Dorsolateral prefrontal cortex (tissue), 120 donors: ENCODE measurements at regions of chr1 and their contacts with region 1.

Region 1: GRCh38 chr1:19704247-19705113 is 39.8 kb downstream of the HTR6 start:
- DNase-seq: peak; percentile 69 to 86 (median 80)
- H3K4me3 ChIP-seq: peak overlapping the region in 22 of 59 donors; percentile 2 to 49 (median 30)
- H3K27ac ChIP-seq: peak overlapping the region in 2 of 59 donors; percentile 3 to 44
- H3K27me3 ChIP-seq: no peaks in the 10 kb centered on the region
- CTCF ChIP-seq: peak; percentile 70 to 95 (median 90)

Region 2: GRCh38 chr1:19661721-19662228 is 42.7 kb before region 1 on chr1:
- intact Hi-C with region 1: loop called (anchors 5 kb)
- DNase-seq: no peak
- H3K4me3 ChIP-seq: no peak overlapping the region
- H3K27ac ChIP-seq: no peak overlapping the region
- H3K27me3 ChIP-seq: peaks cover 0 to 32% (median 17%) of the 10 kb centered on the region in 45 donors
- CTCF ChIP-seq: peak; percentile 62 to 94 (median 81)

Region 3: DNA sequence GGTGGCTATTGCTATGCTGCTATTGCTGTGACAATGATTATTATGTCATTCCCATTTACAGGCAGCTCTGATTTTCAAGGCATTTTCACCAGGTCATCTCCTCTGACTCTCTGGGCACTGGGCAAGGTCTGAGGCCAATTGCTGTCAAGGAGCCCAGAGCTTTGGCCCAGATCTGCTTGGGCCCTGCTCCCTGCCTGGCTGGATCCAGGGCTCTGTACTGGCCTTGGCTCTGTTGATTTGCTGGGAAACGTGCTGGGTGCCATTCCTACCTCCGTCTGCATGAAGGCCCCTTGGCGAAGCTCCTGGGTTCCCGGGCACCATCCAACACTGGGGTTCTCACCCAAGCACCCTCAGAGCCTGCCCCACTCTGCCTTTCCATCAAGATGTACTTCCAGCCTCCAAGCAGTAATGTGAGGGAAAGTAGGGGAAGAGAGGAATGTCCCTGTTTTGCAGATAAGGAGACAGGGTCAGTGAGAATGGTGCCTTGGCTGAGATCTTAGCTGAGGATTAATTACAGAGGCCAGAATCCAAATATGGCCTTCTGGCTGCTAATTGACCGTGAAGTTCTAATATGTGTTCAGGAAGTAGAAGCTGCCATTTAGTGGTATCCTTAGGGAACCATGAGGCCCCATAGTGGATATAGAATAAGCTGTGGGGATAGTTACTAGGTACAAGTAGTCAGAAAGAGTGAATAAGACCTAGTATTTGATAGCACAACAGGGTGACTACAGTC is 24.1 kb after region 1 on chr1:
- intact Hi-C with region 1: no loop called
- DNase-seq: peak in 2 of 10 donors; percentile 42 to 73
- H3K4me3 ChIP-seq: no peak overlapping the region
- H3K27ac ChIP-seq: peak overlapping the region in 2 of 59 donors; percentile 10 to 29
- H3K27me3 ChIP-seq: no peaks in the 10 kb centered on the region
- CTCF ChIP-seq: no peak